Endothelial cell of umbilical vein (primary cell): ENCODE measurements at regions of chr6 and their contacts with region 1.

Region 1: GRCh38 chr6:108052706-108053105 is 21.8 kb downstream of the OSTM1 start:
- DNase-seq: no peak
- H3K4me3 ChIP-seq: no peak overlapping the region
- H3K27ac ChIP-seq: no peak overlapping the region
- H3K4me1 ChIP-seq: no peaks in the 10 kb centered on the region
- H3K27me3 ChIP-seq: no peaks in the 10 kb centered on the region
- CTCF ChIP-seq: no peak
- POLR2A ChIP-seq: no peak

Region 2: GRCh38 chr6:107132330-107132954 is 920.3 kb before region 1 on chr6:
- CTCF ChIA-PET with region 1: interaction called, 12 read pairs
- POLR2A ChIA-PET with region 1: no interaction called
- dilution Hi-C with region 1: no loop called
- intact Hi-C with region 1: loop called (anchors 5 kb)
- DNase-seq: peak; percentile 32
- H3K4me3 ChIP-seq: no peak overlapping the region
- H3K27ac ChIP-seq: no peak overlapping the region
- H3K4me1 ChIP-seq: peaks cover 6% of the 10 kb centered on the region
- H3K27me3 ChIP-seq: no peaks in the 10 kb centered on the region
- CTCF ChIP-seq: peak; percentile 38 to 46
- POLR2A ChIP-seq: no peak

Region 3: GRCh38 chr6:107674995-107675738 is 377.5 kb before region 1 on chr6:
- CTCF ChIA-PET with region 1: interaction called, 7 read pairs
- POLR2A ChIA-PET with region 1: no interaction called
- dilution Hi-C with region 1: no loop called
- intact Hi-C with region 1: loop called (anchors 1 kb)
- DNase-seq: peak; percentile 81
- H3K4me3 ChIP-seq: no peak overlapping the region
- H3K27ac ChIP-seq: no peak overlapping the region
- H3K4me1 ChIP-seq: peaks cover 13% of the 10 kb centered on the region
- H3K27me3 ChIP-seq: peaks cover 8 to 14% of the 10 kb centered on the region in 2 experiments
- CTCF ChIP-seq: peak; percentile 83 to 87
- POLR2A ChIP-seq: no peak

Region 4: GRCh38 chr6:107943626-107944439 is 108.9 kb before region 1 on chr6:
- CTCF ChIA-PET with region 1: no interaction called
- POLR2A ChIA-PET with region 1: no interaction called
- dilution Hi-C with region 1: no loop called
- intact Hi-C with region 1: no loop called
- DNase-seq: no peak
- H3K4me3 ChIP-seq: no peak overlapping the region
- H3K27ac ChIP-seq: no peak overlapping the region
- H3K4me1 ChIP-seq: no peaks in the 10 kb centered on the region
- H3K27me3 ChIP-seq: no peaks in the 10 kb centered on the region
- CTCF ChIP-seq: no peak
- POLR2A ChIP-seq: no peak

Region 5: DNA sequence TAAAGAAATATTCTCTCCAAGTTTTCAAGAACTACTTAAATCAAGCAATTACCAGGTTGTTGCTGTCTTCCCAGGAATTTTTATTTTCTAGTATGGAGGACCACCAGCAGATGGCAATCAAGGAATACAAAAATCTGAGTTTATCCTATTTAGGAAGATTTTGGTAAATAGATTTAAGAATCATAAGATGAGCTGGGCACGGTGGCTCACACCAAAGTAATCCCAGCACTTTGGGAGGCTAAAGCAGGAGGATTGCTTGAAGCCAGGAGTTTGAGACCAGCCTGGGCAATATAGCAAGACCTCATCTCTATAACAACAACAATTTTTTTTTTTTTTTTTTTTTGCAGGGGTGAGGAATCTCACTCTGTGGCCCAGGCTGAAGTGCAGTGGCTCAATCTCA is 75.4 kb before region 1 on chr6:
- CTCF ChIA-PET with region 1: interaction called, 23 read pairs
- POLR2A ChIA-PET with region 1: no interaction called
- dilution Hi-C with region 1: no loop called
- intact Hi-C with region 1: loop called (anchors 1 kb)
- DNase-seq: peak; percentile 61
- H3K4me3 ChIP-seq: no peak overlapping the region
- H3K27ac ChIP-seq: no peak overlapping the region
- H3K4me1 ChIP-seq: no peaks in the 10 kb centered on the region
- H3K27me3 ChIP-seq: peaks cover 8 to 12% of the 10 kb centered on the region in 2 experiments
- CTCF ChIP-seq: peak; percentile 5 to 8
- POLR2A ChIP-seq: no peak

Region 6: DNA sequence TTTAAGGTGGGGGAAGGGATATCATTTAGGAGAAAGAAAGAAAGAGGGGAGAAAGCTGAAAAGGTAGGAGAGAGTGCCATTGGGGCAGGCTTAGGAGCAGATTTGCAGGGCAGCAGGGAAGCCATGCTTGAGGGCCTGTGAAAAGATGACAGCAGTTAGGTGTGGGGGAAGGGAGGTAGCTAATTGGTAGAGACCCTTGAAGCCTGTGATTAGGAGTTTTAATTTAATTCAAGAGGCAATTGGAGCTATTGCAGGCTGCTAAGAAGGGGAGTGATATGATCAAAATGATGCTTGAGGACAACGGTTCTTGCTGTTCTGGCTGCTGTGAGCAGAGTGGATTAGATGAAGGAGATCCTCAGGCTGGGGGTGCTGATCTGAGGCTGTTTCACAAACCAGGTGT is 70.2 kb before region 1 on chr6:
- CTCF ChIA-PET with region 1: interaction called, 23 read pairs
- POLR2A ChIA-PET with region 1: no interaction called
- dilution Hi-C with region 1: no loop called
- intact Hi-C with region 1: loop called (anchors 1 kb)
- DNase-seq: no peak
- H3K4me3 ChIP-seq: no peak overlapping the region
- H3K27ac ChIP-seq: no peak overlapping the region
- H3K4me1 ChIP-seq: no peaks in the 10 kb centered on the region
- H3K27me3 ChIP-seq: peaks cover 0 to 6% of the 10 kb centered on the region in 2 experiments
- CTCF ChIP-seq: no peak
- POLR2A ChIP-seq: no peak

Region 7: GRCh38 chr6:108002365-108003221 is 50.1 kb before region 1 on chr6:
- CTCF ChIA-PET with region 1: no interaction called
- POLR2A ChIA-PET with region 1: no interaction called
- dilution Hi-C with region 1: no loop called
- intact Hi-C with region 1: no loop called
- DNase-seq: peak; percentile 26
- H3K4me3 ChIP-seq: no peak overlapping the region
- H3K27ac ChIP-seq: no peak overlapping the region
- H3K4me1 ChIP-seq: no peaks in the 10 kb centered on the region
- H3K27me3 ChIP-seq: no peaks in the 10 kb centered on the region
- CTCF ChIP-seq: no peak
- POLR2A ChIP-seq: no peak

Region 8: DNA sequence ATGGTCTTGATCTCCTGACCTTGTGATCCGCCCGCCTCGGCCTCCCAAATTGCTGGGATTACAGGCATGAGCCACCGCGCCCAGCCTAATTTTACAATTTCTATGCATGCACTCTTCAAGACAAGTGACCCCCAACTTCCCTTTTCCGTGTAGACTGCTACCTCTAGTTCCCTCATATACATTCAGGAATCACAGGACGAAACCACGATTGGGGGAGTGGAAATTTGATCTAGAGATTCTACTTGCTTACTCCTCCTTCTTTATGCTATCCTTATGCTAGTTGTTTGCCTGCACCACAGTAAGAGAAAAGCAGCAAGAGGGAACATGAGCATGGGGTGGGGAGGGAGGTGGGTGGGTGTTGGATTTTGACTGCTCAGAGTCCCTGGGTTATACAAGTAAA is 13.0 kb before region 1 on chr6:
- CTCF ChIA-PET with region 1: interaction called, 12 read pairs
- POLR2A ChIA-PET with region 1: no interaction called
- dilution Hi-C with region 1: no loop called
- intact Hi-C with region 1: no loop called
- DNase-seq: no peak
- H3K4me3 ChIP-seq: no peak overlapping the region
- H3K27ac ChIP-seq: no peak overlapping the region
- H3K4me1 ChIP-seq: no peaks in the 10 kb centered on the region
- H3K27me3 ChIP-seq: no peaks in the 10 kb centered on the region
- CTCF ChIP-seq: no peak
- POLR2A ChIP-seq: no peak

Region 9: DNA sequence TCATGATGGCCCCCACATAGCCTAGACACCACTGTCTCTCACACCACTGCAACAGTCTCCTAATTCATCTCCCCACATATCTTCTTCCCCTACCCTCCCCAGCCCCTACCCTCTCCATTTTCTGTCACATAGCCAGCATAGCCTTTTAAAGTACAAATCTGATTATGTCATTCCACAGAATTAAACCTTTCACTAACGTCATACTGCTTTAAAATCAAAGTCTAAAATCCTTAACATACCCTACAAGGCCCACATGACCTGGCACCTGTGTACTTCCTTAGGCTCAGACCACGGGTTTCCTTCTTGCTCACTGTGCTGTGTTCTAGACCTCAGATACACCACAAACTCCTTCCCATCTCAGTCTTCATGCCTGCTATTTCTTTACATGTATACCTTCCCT is 15.9 kb after region 1 on chr6:
- CTCF ChIA-PET with region 1: interaction called, 10 read pairs
- POLR2A ChIA-PET with region 1: no interaction called
- dilution Hi-C with region 1: no loop called
- intact Hi-C with region 1: no loop called
- DNase-seq: no peak
- H3K4me3 ChIP-seq: no peak overlapping the region
- H3K27ac ChIP-seq: no peak overlapping the region
- H3K4me1 ChIP-seq: peaks cover under 1% of the 10 kb centered on the region
- H3K27me3 ChIP-seq: no peaks in the 10 kb centered on the region
- CTCF ChIP-seq: no peak
- POLR2A ChIP-seq: no peak